PC-9 (cell line): ENCODE measurements at regions of chr18 and their contacts with region 1.

Region 1: GRCh38 chr18:8478166-8478967 is 130.9 kb upstream of the RAB12 start:
- DNase-seq: peak in 1 of 2 experiments; percentile 62
- H3K4me3 ChIP-seq: no peak overlapping the region
- H3K27ac ChIP-seq: no peak overlapping the region
- H3K4me1 ChIP-seq: no peaks in the 10 kb centered on the region
- H3K27me3 ChIP-seq: no peaks in the 10 kb centered on the region; the same call in 1 of the 2 replicates
- CTCF ChIP-seq: peak; percentile 94

Region 2: GRCh38 chr18:7221424-7222155 is 1256.8 kb before region 1 on chr18:
- CTCF ChIA-PET with region 1: no interaction called
- POLR2A ChIA-PET with region 1: no interaction called
- intact Hi-C with region 1: loop called (anchors 1 kb)
- DNase-seq: peak; percentile 35 to 46
- H3K4me3 ChIP-seq: no peak overlapping the region
- H3K27ac ChIP-seq: no peak overlapping the region
- H3K4me1 ChIP-seq: no peaks in the 10 kb centered on the region
- H3K27me3 ChIP-seq: peaks cover 17% of the 10 kb centered on the region; the same call in 1 of the 2 replicates
- CTCF ChIP-seq: peak; percentile 76

Region 3: DNA sequence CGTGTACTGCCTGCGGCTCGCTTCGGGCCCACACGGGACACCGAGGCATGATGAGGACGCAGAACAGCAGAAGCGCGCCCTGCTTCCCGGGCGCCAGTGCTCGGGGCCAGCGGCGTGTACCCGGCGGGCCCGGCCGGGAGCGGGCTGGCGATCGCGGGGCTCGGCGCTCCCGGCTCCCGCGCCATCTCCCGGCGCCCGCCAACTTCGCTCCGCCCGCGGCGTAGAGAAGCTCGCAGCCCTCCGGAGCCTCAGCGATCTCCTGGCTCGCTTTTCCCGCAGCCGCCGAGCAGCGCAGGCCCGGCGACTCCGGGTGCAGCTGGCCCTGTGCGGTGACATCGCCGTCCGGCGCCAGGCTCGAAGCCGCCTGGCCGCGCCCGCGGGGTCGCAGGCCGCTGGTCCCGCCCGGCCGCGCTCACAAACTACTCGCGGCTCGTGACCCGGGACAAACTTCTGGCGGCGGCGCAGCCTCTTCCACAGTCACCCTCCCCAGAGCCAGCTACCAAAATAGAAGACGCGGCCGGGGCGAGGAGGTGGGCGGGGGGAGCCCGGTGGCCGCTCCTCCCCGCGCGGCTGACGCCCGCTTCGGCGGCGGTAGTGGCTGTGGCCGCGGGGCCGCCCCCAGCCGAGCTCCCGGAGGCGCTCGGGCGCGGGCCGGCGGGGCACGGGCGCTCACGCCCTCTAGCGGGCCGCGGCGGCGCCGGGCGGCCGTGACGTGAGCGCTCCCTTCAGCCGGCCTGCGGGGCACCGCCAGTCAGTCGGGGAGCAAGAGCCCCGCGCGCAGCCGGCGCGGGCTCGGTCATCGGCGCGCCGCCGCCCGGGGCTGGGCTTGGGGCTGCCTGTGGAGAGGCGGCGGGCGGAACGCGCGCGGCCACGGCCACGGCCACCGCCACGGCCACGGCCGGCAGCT is 911.5 kb before region 1 on chr18 and contains the start of gene PTPRM:
- CTCF ChIA-PET with region 1: no interaction called
- POLR2A ChIA-PET with region 1: no interaction called
- intact Hi-C with region 1: loop called (anchors 5 kb)
- DNase-seq: peak in 1 of 2 experiments; percentile 78
- H3K4me3 ChIP-seq: peak within 1 kb of the TSS; percentile 91
- H3K27ac ChIP-seq: no peak within 1 kb of the TSS
- H3K4me1 ChIP-seq: peaks cover 14% of the 10 kb centered on the region
- H3K27me3 ChIP-seq: no peaks in the 10 kb centered on the region
- CTCF ChIP-seq: no peak
- total RNA-seq, gene PTPRM: 30.7 and 32.5 TPM in 2 replicates

Region 4: GRCh38 chr18:7974200-7974874 is 504.0 kb before region 1 on chr18:
- CTCF ChIA-PET with region 1: no interaction called
- POLR2A ChIA-PET with region 1: no interaction called
- intact Hi-C with region 1: loop called (anchors 10 kb)
- DNase-seq: no peak
- H3K4me3 ChIP-seq: no peak overlapping the region
- H3K27ac ChIP-seq: no peak overlapping the region
- H3K4me1 ChIP-seq: no peaks in the 10 kb centered on the region
- H3K27me3 ChIP-seq: no peaks in the 10 kb centered on the region
- CTCF ChIP-seq: no peak

Region 5: DNA sequence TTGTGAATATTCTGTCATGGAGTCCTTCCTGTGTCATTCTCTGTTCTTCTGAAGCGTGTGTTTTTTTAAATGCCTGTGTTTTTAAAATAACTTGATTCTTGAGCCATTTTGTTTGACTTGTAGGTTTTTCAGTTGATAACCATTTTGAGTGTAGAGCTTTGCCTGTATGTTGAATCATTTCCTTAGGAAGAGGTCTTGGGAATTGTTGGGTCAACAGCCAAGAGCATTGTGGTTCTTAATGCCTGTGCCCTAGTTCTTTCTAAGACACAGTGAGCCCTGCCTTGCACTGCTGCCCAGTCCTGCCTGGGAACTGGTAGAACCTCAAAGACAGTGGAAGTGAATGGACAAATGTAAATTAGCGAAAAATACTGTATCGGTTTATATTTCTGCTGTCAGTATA is 156.7 kb after region 1 on chr18:
- CTCF ChIA-PET with region 1: no interaction called
- POLR2A ChIA-PET with region 1: no interaction called
- intact Hi-C with region 1: no loop called
- DNase-seq: no peak
- H3K4me3 ChIP-seq: no peak overlapping the region
- H3K27ac ChIP-seq: no peak overlapping the region
- H3K4me1 ChIP-seq: no peaks in the 10 kb centered on the region
- H3K27me3 ChIP-seq: no peaks in the 10 kb centered on the region
- CTCF ChIP-seq: no peak